Cardiac septum (tissue), 1 donor: ENCODE measurements at regions of chr9 and their contacts with region 1.

Region 1: DNA sequence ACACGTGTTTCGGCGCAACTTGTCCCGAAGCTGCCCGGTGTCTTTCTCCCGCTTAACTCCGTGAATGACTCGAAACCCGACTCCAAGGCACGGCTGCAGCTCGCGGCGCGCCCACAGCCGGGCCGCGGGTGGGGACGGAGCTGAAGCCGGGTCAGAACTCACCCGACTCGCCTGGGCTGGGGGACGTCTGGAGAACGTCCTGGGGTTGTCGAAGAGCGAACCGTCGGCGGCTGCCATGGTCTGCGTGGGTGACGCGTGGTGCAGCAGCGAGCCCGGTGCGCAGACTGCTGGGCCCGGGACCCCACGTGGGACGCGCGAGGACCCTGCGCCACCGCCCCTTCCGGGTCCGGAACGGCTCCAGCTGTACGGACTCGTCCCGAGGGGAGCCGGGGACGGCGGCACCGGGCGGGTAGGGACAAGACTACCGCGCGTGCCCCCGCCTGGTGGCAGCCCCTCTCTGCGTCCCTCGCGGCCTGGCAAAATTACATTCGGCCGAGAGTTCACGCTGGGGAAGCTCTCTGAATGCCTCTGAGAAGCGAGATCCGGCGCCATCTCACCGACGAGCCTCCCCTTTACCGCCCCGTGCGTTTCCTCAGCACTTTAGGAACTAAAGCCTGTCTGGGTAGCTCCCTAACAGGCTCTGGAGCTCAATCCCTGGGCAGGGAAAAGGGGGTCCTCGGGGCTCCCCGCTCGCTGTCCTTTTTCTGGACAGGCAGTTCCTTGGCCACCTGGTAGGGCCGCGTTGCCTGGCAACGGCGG is at the start of gene DDX31:
- DNase-seq: peak; percentile 92
- total RNA-seq, gene DDX31: 5.7 TPM

Region 2: DNA sequence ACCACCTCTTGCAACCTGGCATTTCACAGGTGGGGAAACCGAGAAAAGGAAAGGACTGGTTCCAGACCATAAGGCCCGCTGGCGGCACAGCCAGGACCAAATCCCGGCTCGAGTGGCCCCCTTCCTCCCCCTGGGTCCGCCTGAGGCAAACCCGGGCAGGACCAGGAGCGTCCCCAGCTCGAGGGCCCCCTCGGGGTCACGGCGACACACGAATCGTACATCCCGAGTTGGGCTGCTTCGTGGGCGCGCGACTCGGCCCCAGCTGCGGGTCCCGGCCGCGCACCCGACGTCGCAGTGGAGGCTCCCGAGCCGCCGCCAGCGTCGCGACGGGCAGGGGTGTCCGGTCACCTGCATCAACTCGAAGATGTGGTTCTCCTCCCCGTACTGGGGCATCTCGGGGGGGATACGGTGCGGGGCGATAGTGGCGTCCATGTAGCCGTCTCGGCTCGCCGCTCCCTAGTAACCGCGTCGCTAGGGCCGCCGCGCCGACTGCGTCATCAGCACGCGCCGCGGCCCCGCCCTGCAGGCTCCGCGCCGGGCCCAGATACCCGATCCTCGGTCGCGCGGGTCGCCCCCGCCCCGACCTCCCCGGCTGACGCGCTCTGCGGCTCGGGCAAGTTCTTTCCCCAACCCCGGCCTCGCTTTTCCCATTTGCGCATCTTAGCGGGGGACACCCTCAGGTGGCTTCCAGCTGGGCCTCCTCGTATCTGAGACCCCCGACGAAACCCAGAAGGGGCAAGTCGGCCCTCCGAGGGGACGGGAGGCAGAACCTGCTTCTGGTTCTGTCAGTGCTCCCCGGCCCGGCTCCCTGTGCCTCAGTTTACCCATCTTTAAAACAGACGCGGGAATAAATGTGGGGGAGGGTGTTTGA is 208.2 kb after region 1 on chr9 and contains the start of gene AK8:
- intact Hi-C with region 1: loop called (anchors 5 kb)
- DNase-seq: peak; percentile 83
- total RNA-seq, gene AK8: 0.13 TPM

Region 3: GRCh38 chr9:133377721-133378216 is 707.9 kb after region 1 on chr9:
- intact Hi-C with region 1: no loop called
- DNase-seq: no peak